Activated CD4-positive, alpha-beta memory T cell treated with anti-CD3 and anti-CD28 coated beads for 36 hours (primary cell): ENCODE measurements at regions of chr16 and their contacts with region 1.

Region 1: DNA sequence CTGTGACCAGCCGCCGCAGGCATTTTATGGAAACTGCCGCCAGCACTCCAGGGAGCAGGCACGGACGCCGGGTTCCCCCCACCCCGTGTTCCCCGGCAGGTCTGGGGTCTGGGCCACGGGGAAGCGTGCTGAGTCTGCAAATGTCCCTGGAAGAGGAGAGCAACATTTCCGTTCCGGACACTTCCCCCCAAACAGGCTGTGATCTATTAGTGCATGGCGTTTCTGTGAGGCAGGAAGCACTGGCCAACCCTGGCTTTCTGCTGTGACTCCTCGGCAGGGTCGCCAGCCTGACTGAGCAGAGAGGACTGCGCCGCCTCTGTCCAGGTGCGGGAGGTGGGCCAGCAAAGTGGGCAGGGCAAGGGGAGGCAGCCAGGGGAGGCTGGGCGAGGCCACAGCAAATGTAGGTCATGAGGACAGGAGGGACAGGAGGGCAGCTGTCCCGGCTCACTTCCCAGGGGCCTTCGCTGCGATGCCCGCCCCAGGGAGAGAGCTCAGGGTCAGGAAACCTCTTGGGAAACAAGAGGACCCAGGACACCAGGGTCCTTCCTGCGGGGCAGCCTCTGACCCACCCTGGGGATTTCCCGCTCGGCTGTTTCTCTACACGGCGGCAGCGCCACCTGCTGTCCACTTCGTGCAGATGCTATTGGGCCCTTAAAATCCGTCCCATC is 9.5 kb downstream of the FOXF1 start:
- DNase-seq: peak; percentile 67
- H3K4me3 Mint-ChIP-seq: no peak overlapping the region
- H3K27ac Mint-ChIP-seq: no peak overlapping the region
- H3K4me1 Mint-ChIP-seq: peaks cover 3% of the 10 kb centered on the region
- H3K27me3 Mint-ChIP-seq: peaks cover 44% of the 10 kb centered on the region

Region 2: DNA sequence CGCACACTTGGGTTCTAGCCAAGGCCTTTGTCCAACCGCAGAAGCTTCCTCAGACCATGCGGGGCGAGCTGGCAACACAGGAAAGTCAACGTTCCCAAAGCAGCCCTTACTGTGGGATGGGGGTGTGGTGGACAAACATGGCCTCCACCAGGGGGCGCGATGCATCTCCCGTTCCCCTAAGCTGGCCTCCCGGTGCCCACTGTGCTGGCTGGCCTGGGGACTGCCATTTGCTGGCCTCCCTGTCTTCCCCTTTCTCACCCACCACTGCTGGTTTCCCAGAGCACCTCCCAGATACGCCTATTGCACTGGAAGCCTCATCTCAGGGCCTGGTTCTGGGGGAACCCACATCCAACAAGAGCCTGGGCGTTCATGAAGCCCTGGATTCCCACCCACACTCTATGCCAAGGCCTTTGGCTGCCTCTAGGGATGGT is 475.5 kb before region 1 on chr16:
- CTCF ChIA-PET with region 1: interaction called, 9 read pairs
- POLR2A ChIA-PET with region 1: no interaction called
- intact Hi-C with region 1: loop called (anchors 10 kb)
- DNase-seq: peak; percentile 59
- H3K4me3 Mint-ChIP-seq: no peak overlapping the region
- H3K27ac Mint-ChIP-seq: no peak overlapping the region
- H3K4me1 Mint-ChIP-seq: peaks cover 14% of the 10 kb centered on the region
- H3K27me3 Mint-ChIP-seq: peaks cover 28% of the 10 kb centered on the region

Region 3: DNA sequence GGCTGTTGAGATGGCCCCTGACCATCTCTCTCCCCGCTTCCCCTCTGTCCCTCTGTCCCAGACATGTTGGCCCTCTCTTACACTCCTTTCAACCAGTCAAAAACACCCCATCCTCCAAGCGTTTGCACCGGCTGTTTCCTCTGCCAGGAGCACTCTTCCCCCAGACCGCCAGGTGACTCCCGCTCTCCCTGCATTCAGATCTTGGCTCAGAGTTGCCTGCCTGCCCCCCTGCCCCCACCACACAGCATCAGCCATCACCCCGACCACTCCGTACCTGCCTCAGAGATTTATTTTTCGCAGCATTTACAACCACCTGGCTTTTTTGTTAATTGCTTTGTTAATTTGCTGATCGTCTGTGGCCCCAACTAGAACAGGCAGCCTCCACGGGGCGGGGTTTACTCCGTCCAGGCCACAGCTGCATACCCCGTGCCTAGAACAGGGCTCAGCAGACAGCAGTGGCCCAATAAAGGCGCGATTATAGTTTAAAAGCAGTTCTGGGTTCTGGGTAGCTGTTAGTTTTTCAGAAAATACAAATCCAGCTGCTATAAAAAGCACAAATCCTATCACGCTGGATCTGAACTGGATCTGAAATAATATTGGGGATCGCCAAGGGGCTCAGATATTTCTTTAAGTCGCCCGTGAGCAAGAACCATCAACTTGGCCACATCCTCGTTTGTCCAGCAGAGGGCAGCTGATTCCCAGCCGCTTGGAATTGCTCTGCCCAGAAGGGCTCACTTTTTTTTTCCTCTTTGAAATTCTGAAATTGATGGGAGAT is 447.3 kb before region 1 on chr16:
- CTCF ChIA-PET with region 1: interaction called, 6 read pairs
- POLR2A ChIA-PET with region 1: no interaction called
- intact Hi-C with region 1: loop called (anchors 1 kb)
- DNase-seq: peak; percentile 57
- H3K4me3 Mint-ChIP-seq: no peak overlapping the region
- H3K27ac Mint-ChIP-seq: no peak overlapping the region
- H3K4me1 Mint-ChIP-seq: no peaks in the 10 kb centered on the region
- H3K27me3 Mint-ChIP-seq: peaks cover 20% of the 10 kb centered on the region

Region 4: DNA sequence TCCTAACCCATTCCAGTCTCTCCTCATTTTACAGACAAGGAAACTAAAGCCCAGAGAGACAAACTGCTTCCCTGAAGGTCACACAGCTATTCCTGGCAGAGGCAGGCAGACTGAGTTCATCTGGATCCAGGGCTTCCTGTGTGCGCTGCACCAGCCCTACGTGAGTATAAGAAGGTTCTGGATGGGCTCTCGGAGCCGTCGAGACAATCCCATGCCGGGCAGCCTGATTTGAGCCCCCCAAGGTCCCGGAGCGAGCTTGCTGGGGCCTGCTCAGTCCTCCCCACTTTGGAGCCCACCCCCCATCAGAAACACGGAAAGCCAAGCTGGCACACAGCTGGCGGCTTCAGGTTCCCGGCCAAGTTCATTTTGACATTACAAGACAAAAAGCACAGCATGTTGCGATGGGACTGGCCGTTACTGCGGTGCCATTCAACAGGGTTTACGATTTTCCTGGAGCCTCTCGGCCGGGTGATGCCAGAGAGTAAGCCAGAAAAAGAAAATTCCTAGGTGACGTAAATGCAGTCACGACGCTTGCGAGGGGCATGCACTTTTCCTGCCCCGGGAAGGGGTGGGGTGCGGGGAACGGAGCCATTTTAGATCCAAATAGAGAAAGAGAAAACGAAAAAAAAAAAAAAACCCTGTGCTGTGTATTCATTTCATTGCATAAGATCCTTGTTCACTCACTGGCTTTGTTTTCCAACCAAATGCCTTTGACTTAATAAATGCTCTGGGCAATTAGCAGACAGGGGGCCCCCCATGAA is 176.6 kb before region 1 on chr16:
- CTCF ChIA-PET with region 1: interaction called, 12 read pairs
- POLR2A ChIA-PET with region 1: no interaction called
- intact Hi-C with region 1: loop called (anchors 1 kb)
- DNase-seq: no peak
- H3K4me3 Mint-ChIP-seq: no peak overlapping the region
- H3K27ac Mint-ChIP-seq: no peak overlapping the region
- H3K4me1 Mint-ChIP-seq: no peaks in the 10 kb centered on the region
- H3K27me3 Mint-ChIP-seq: peaks cover 27% of the 10 kb centered on the region

Region 5: GRCh38 chr16:86628614-86629013 is 108.8 kb after region 1 on chr16:
- CTCF ChIA-PET with region 1: no interaction called
- POLR2A ChIA-PET with region 1: no interaction called
- intact Hi-C with region 1: no loop called
- DNase-seq: no peak
- H3K4me3 Mint-ChIP-seq: no peak overlapping the region
- H3K27ac Mint-ChIP-seq: no peak overlapping the region
- H3K4me1 Mint-ChIP-seq: no peaks in the 10 kb centered on the region
- H3K27me3 Mint-ChIP-seq: peaks cover 7% of the 10 kb centered on the region